ENCODE measurements at regions of chr4 and their contacts with region 1.

Region 1: GRCh38 chr4:88456757-88457306 is at the start of gene HERC5:
- DNase-seq: peak; percentile 90 to 94 (median 92)
- ATAC-seq: peak; percentile 98
- H3K4me3 ChIP-seq: peak within 1 kb of the TSS; percentile 100
- H3K4me3 Mint-ChIP-seq: peak within 1 kb of the TSS; percentile 87 to 100 (median 98)
- H3K27ac ChIP-seq: peak within 1 kb of the TSS; percentile 72
- H3K27ac Mint-ChIP-seq: peak within 1 kb of the TSS; percentile 94 to 100 (median 99)
- H3K4me1 ChIP-seq: peaks cover 5 to 6% of the 10 kb centered on the region in 2 donors
- H3K4me1 Mint-ChIP-seq: peaks cover 10 to 52% (median 37%) of the 10 kb centered on the region in 7 donors
- H3K27me3 ChIP-seq: no peaks in the 10 kb centered on the region
- H3K27me3 Mint-ChIP-seq: no peaks in the 10 kb centered on the region
- total RNA-seq, gene HERC5: 11.8 to 52.5 (median 14.1) TPM

Region 2: GRCh38 chr4:87422104-87423052 is 1034.5 kb before region 1 on chr4 and contains the start of gene NUDT9:
- CTCF ChIA-PET with region 1: no interaction called
- POLR2A ChIA-PET with region 1: no interaction called
- intact Hi-C with region 1: loop called in 1 of 2 experiments (anchors 2 kb)
- DNase-seq: peak; percentile 74 to 92 (median 89)
- ATAC-seq: peak; percentile 92
- H3K4me3 ChIP-seq: peak within 1 kb of the TSS; percentile 96
- H3K4me3 Mint-ChIP-seq: peak within 1 kb of the TSS; percentile 94 to 100 (median 98)
- H3K27ac ChIP-seq: peak within 1 kb of the TSS; percentile 85
- H3K27ac Mint-ChIP-seq: peak within 1 kb of the TSS; percentile 97 to 100 (median 99)
- H3K4me1 ChIP-seq: peaks cover 17% of the 10 kb centered on the region in 2 donors
- H3K4me1 Mint-ChIP-seq: peaks cover 14 to 59% (median 48%) of the 10 kb centered on the region in 7 donors
- H3K27me3 ChIP-seq: no peaks in the 10 kb centered on the region
- H3K27me3 Mint-ChIP-seq: no peaks in the 10 kb centered on the region
- total RNA-seq, gene NUDT9: 9.7 to 18.1 (median 10.5) TPM

Region 3: GRCh38 chr4:88320780-88321373 is 136.0 kb before region 1 on chr4:
- CTCF ChIA-PET with region 1: no interaction called
- POLR2A ChIA-PET with region 1: interaction called, 3 read pairs
- intact Hi-C with region 1: loop called in 1 of 2 experiments (anchors 2 kb)
- DNase-seq: peak in 7 of 9 donors; percentile 9 to 39 (median 25)
- ATAC-seq: peak; percentile 91
- H3K4me3 ChIP-seq: peak overlapping the region; percentile 18
- H3K4me3 Mint-ChIP-seq: peak overlapping the region; percentile 69 to 90 (median 82)
- H3K27ac ChIP-seq: peak overlapping the region; percentile 63
- H3K27ac Mint-ChIP-seq: peak overlapping the region; percentile 88 to 98 (median 93)
- H3K4me1 ChIP-seq: peaks cover 7 to 13% of the 10 kb centered on the region in 2 donors
- H3K4me1 Mint-ChIP-seq: peaks cover 14 to 30% (median 23%) of the 10 kb centered on the region in 7 donors
- H3K27me3 ChIP-seq: no peaks in the 10 kb centered on the region
- H3K27me3 Mint-ChIP-seq: no peaks in the 10 kb centered on the region

Region 4: DNA sequence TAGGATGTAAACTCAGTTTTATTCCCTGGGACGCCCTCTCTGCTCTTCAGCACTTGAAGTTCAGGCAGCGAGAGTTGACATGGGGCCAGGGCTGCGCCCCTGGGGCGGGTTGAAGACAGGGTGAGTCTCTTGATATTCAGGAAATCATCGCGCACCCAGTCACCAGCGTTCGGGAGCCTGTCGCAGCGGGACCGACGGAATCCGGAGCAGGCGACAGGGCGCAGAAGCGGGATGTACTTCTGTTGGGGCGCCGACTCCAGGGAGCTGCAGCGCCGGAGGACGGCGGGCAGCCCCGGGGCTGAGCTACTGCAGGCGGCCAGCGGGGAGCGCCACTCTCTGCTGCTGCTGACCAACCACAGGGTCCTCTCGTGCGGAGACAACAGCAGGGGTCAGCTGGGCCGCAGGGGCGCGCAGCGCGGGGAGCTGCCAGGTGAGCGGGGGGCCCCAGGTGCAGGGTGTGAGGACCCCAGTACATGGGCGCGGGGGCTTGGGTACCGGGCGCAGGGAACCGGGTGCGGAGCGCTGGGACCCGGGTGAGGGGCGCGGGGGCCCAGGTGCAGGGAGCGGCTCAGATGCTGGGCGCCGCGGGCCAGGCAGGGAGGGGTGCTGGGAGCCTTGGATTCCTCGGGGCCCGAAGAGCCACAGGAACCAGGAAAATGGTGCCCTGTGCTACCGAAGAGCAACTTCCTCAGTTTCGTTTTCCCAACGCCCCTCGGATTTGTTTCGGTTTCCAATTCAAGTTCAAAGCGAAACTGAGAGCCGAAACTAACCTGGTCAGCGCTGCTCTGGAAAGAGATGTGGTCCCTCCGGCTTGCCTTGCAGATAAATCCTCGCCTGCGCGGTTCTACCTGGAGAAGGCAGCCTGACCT is 77.9 kb before region 1 on chr4 and contains the start of gene HERC6:
- CTCF ChIA-PET with region 1: interaction called, 5 read pairs
- POLR2A ChIA-PET with region 1: interaction called, 15 read pairs
- intact Hi-C with region 1: loop called (anchors 1 kb)
- DNase-seq: peak; percentile 49 to 77 (median 70)
- ATAC-seq: peak; percentile 80
- H3K4me3 ChIP-seq: peak within 1 kb of the TSS; percentile 95
- H3K4me3 Mint-ChIP-seq: peak within 1 kb of the TSS; percentile 88 to 98 (median 94)
- H3K27ac ChIP-seq: peak within 1 kb of the TSS; percentile 92
- H3K27ac Mint-ChIP-seq: peak within 1 kb of the TSS; percentile 91 to 99 (median 94)
- H3K4me1 ChIP-seq: peaks cover 21 to 27% of the 10 kb centered on the region in 2 donors
- H3K4me1 Mint-ChIP-seq: peaks cover 24 to 60% (median 46%) of the 10 kb centered on the region in 7 donors
- H3K27me3 ChIP-seq: no peaks in the 10 kb centered on the region
- H3K27me3 Mint-ChIP-seq: no peaks in the 10 kb centered on the region
- total RNA-seq, gene HERC6: 12.6 to 43.5 (median 23.0) TPM

Region 5: GRCh38 chr4:88613417-88613875 is 156.6 kb after region 1 on chr4:
- CTCF ChIA-PET with region 1: no interaction called
- POLR2A ChIA-PET with region 1: no interaction called
- intact Hi-C with region 1: loop called in 1 of 2 experiments (anchors 1 kb)
- DNase-seq: peak in 7 of 9 donors; percentile 71 to 91 (median 85)
- ATAC-seq: peak; percentile 94
- H3K4me3 ChIP-seq: peak overlapping the region; percentile 43
- H3K4me3 Mint-ChIP-seq: peak overlapping the region; percentile 64 to 92 (median 84)
- H3K27ac ChIP-seq: peak overlapping the region; percentile 77
- H3K27ac Mint-ChIP-seq: peak overlapping the region; percentile 91 to 99 (median 99)
- H3K4me1 ChIP-seq: peaks cover 28 to 55% of the 10 kb centered on the region in 2 donors
- H3K4me1 Mint-ChIP-seq: peaks cover 50 to 98% (median 86%) of the 10 kb centered on the region in 7 donors
- H3K27me3 ChIP-seq: no peaks in the 10 kb centered on the region
- H3K27me3 Mint-ChIP-seq: no peaks in the 10 kb centered on the region

Measured in naive thymus-derived CD4-positive, alpha-beta T cell (primary cell).